Mammary epithelial cell (primary cell): ENCODE measurements at regions of chr18 and their contacts with region 1.

Region 1: GRCh38 chr18:43571078-43571689 is 293.9 kb upstream of the SYT4 start:
- DNase-seq: peak; percentile 33
- H3K4me3 ChIP-seq: no peak overlapping the region
- H3K27ac ChIP-seq: no peak overlapping the region
- H3K4me1 ChIP-seq: no peaks in the 10 kb centered on the region
- H3K27me3 ChIP-seq: peaks cover 4% of the 10 kb centered on the region
- CTCF ChIP-seq: peak; percentile 69 to 70

Region 2: GRCh38 chr18:42310956-42311355 is 1260.2 kb before region 1 on chr18:
- CTCF ChIA-PET with region 1: no interaction called
- dilution Hi-C with region 1: no loop called
- in situ Hi-C with region 1: loop called in 1 of 2 experiments (anchors 25 kb)
- intact Hi-C with region 1: no loop called
- DNase-seq: peak; percentile 70
- H3K4me3 ChIP-seq: no peak overlapping the region
- H3K27ac ChIP-seq: peak overlapping the region; percentile 28
- H3K4me1 ChIP-seq: peaks cover 5% of the 10 kb centered on the region
- H3K27me3 ChIP-seq: no peaks in the 10 kb centered on the region
- CTCF ChIP-seq: no peak

Region 3: DNA sequence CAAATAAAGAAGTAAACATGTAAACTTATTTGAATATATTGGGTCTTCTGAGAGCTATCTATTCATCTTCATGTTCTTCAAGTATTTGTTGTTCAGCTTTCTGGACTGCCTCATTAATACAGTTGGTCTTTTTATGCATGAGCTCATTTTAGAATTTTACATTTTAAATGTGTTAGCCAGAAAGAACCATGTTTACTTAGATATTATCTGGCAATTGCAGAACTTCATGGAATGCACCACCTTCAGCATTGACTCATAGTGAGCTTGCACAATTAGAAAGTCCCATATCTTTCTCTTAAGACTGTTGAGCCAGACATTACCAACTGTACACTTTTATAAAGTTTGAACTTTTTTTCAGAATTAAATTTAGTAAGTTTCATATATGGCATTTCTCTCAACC is 992.4 kb before region 1 on chr18:
- CTCF ChIA-PET with region 1: no interaction called
- dilution Hi-C with region 1: no loop called
- in situ Hi-C with region 1: loop called (anchors 25 kb)
- intact Hi-C with region 1: no loop called
- DNase-seq: peak; percentile 23
- H3K4me3 ChIP-seq: no peak overlapping the region
- H3K27ac ChIP-seq: no peak overlapping the region
- H3K4me1 ChIP-seq: no peaks in the 10 kb centered on the region
- H3K27me3 ChIP-seq: no peaks in the 10 kb centered on the region
- CTCF ChIP-seq: no peak

Region 4: DNA sequence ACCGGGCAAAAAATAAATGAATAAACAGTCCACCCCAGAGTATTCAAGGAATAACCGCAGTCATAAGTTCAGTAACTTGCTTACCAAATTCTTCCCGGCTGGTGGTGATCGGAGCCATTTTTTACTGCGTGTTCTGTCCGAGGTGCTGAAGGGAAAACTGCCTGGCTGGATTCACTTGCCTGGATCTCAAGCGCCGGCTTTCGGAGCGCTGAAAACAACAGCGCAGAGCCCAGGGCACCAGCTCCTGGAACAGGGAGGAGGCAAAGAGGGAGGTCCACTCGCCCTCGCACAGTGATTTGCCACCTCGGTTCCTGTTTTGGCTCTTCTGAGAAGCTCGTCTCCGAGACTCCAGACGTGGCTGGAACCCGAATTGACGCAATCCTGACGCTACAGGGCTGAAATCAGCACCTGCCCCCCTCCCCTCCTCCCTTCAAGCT is 294.0 kb before region 1 on chr18 and contains the start of gene SYT4:
- CTCF ChIA-PET with region 1: no interaction called
- dilution Hi-C with region 1: no loop called
- in situ Hi-C with region 1: loop called in 1 of 2 experiments (anchors 25 kb)
- intact Hi-C with region 1: no loop called
- DNase-seq: peak; percentile 42
- H3K4me3 ChIP-seq: no peak within 1 kb of the TSS
- H3K27ac ChIP-seq: no peak within 1 kb of the TSS
- H3K4me1 ChIP-seq: no peaks in the 10 kb centered on the region
- H3K27me3 ChIP-seq: peaks cover 5% of the 10 kb centered on the region
- CTCF ChIP-seq: no peak
- total RNA-seq, gene SYT4: not detected

Region 5: GRCh38 chr18:43422518-43422917 is 148.7 kb before region 1 on chr18:
- CTCF ChIA-PET with region 1: interaction called, 4 read pairs
- dilution Hi-C with region 1: no loop called
- in situ Hi-C with region 1: loop called (anchors 25 kb)
- intact Hi-C with region 1: no loop called
- DNase-seq: no peak
- H3K4me3 ChIP-seq: no peak overlapping the region
- H3K27ac ChIP-seq: no peak overlapping the region
- H3K4me1 ChIP-seq: no peaks in the 10 kb centered on the region
- H3K27me3 ChIP-seq: peaks cover 4% of the 10 kb centered on the region
- CTCF ChIP-seq: peak; percentile 15 to 50

Region 6: GRCh38 chr18:43587538-43588153 is 16.5 kb after region 1 on chr18:
- CTCF ChIA-PET with region 1: interaction called, 4 read pairs
- dilution Hi-C with region 1: no loop called
- in situ Hi-C with region 1: no loop called
- intact Hi-C with region 1: loop called (anchors 1 kb)
- DNase-seq: peak; percentile 26
- H3K4me3 ChIP-seq: no peak overlapping the region
- H3K27ac ChIP-seq: no peak overlapping the region
- H3K4me1 ChIP-seq: no peaks in the 10 kb centered on the region
- H3K27me3 ChIP-seq: no peaks in the 10 kb centered on the region
- CTCF ChIP-seq: peak; percentile 71 to 80

Region 7: DNA sequence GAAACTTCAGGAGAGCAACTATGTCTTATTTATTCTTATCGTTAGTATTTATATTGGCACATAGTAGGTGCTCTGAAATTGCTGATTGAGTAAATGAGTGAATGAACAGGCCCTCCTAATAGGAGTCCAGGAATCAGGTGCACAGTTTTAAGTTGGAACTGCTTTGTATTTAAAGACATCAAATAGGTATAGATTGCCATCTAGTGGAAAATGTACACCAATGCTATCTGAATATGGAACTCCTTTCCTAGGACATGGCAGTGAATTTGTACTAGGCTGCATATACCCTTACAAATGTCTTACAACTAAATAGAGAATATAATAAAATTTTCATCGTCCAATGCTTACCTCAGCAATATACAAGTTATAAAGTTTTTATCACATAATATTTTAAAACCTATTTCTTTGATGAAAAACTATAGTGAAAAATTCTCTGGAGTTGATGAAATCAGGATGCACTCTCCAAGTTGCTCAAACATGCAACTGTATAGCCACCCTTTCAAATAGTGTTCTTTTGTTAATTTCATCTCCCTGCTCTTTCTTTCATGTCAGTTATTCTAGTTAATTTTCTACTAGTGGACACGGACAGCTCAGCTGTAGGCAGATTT is 25.0 kb after region 1 on chr18:
- CTCF ChIA-PET with region 1: no interaction called
- dilution Hi-C with region 1: no loop called
- in situ Hi-C with region 1: no loop called
- intact Hi-C with region 1: loop called (anchors 1 kb)
- DNase-seq: peak; percentile 14
- H3K4me3 ChIP-seq: no peak overlapping the region
- H3K27ac ChIP-seq: no peak overlapping the region
- H3K4me1 ChIP-seq: no peaks in the 10 kb centered on the region
- H3K27me3 ChIP-seq: no peaks in the 10 kb centered on the region
- CTCF ChIP-seq: peak; percentile 64 to 68